Activated CD4-positive, alpha-beta T cell treated with anti-CD3 and anti-CD28 coated beads for 36 hours (primary cell): ENCODE measurements at regions of chr3 and their contacts with region 1.

Region 1: DNA sequence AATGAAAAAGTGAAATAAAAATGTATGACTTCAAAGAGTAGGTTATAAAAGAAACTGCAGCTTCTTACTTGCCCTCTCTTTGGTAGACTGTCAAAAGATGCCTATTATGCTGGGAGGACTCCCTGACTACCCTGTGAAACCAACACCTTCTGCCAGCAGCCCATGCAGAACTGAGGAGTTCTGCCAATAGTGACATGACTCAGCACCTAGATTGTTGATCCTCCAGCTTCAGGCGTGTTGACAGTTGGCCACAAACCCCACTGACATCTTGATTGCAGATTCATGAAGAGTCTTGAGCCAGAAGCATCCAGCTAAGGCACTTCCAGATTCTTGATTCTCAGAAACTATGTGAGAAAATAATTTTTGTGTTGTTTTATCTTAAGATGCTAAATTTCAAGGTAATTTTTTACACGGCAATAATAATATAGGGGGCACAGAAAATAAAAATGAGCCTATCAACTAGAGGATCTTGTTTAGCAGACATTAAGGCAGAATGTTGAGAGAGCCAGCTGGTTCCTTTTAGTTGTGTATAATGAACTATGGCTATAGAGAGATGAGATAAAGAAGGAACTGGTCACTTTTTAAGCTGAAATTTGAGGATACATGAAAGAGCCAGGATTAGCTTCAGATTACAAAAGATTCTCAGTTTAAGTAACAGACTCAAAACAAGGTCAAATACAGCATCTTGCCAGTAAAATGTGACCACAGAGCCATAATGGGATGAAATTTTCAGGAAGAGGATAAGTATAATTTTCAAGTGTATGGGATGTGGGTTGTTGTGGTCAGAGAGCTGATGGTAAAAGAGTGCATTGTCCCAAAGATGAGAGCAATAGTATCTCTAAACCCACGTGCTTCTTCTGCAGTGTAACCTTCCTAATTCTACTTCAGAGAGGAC is 588.7 kb upstream of the CBLB start:
- DNase-seq: peak; percentile 56
- ATAC-seq: peak; percentile 99
- H3K4me3 Mint-ChIP-seq: no peak overlapping the region
- H3K27ac Mint-ChIP-seq: peak overlapping the region; percentile 1
- H3K4me1 Mint-ChIP-seq: peaks cover 15% of the 10 kb centered on the region
- H3K27me3 Mint-ChIP-seq: no peaks in the 10 kb centered on the region

Region 2: DNA sequence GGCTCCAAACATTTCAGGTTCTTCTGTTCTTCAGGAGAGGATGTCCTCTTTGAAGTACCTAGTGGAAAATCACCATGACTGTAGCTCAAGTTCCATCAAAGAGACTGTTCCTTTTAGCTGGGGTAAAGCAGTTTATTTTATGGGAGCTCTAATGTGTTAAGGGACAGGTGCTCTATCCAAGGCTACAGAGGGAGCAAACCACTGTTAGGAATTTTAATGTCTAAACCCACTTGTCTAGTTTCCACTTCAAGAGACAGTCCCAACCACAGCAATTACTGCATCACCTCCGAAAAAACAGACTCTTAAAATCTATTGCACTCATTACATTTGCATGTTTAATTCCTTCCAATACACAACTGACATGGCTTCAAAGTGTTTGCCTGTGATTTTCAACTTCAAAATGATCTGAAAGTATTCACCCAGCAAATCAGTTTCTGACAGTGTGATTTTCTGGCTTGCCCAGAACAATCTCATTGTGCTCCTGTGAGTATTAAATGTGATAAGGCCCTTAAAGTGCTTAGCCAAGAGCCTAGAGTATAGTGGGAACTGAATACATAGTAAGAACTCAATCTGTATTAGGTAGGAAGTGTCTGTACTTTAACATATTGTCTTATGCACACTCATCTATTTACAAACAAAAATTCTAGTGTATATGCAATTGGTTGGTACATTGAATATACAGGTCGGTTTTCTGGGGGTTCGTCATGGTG is 653.2 kb after region 1 on chr3:
- CTCF ChIA-PET with region 1: no interaction called
- POLR2A ChIA-PET with region 1: no interaction called
- intact Hi-C with region 1: loop called in 1 of 2 experiments (anchors 5 kb)
- DNase-seq: no peak
- ATAC-seq: no peak
- H3K4me3 Mint-ChIP-seq: no peak overlapping the region
- H3K27ac Mint-ChIP-seq: no peak overlapping the region
- H3K4me1 Mint-ChIP-seq: no peaks in the 10 kb centered on the region
- H3K27me3 Mint-ChIP-seq: no peaks in the 10 kb centered on the region